ENCODE measurements at regions of chr13 and their contacts with region 1.

Region 1: DNA sequence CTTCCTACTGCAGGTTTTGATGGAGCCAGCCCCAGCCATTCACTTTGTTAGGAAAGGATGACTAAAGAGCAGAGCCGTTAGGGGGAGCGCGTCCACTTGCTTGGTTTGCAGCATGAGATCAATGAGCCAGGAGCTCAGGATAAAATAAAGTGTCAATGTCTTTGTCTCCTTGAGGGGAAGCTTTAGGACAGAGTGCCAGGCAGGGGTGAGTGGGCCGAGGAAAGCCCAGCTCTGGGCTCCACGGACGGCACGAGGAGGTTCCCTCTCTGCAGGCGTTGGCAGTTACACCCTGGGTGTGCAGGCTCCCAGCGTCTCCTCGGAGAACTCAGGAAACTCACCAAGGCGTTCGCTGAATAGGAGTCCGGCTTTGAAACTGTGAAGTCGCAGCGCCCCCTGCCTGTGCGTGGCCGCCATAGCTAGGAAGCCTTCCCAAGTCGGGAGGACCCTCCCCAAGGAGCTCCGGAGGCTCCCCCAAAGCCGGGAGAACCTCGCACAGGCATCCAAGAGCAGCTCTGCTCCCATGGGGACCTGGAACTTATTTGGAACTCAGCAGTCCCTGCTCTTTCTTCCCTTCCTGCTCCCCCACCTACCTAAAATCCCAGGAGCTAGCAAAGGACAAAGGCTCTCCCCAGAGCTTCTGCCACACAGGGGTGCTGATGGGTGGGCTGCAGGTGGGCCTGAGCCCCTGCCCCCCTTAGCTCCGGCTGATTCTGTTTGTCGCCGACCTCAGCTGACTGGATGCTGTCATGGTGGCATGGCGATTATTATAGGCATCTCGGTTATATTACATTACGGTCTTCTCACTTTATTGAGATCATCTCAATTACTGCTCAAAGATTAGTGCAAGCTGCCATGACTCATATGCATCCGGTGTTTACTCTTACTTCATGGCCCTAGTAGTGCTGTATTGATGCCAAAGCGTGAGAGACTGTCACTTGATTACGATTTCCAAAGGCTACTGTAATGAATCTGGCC is 34.4 kb downstream of the GSX1 start:
- H3K4me3 Mint-ChIP-seq: peak overlapping the region; percentile 47
- H3K27ac Mint-ChIP-seq: no peak overlapping the region
- H3K4me1 Mint-ChIP-seq: peaks cover 17% of the 10 kb centered on the region
- H3K27me3 Mint-ChIP-seq: peaks cover 91% of the 10 kb centered on the region

Region 2: DNA sequence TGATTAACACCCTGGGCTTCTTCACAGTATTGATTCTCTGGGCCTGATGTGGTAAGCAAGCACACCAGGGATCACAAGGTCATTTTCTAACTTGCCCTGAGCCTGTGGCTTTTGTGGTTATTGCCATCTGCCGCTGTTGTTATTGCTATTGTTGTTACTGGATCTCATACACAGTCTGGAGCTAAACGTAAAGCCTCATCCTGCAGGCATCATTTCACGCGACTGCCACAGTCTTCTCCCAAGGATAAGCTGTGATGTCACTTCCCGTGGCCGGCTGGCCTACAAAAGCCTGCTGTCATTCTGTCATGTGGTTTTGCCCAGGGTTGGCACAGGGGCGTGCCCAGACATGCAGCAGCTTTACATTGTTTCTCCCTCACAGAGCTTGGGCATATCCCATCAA is 912.0 kb before region 1 on chr13:
- intact Hi-C with region 1: no loop called
- H3K4me3 Mint-ChIP-seq: no peak overlapping the region
- H3K27ac Mint-ChIP-seq: no peak overlapping the region
- H3K4me1 Mint-ChIP-seq: peaks cover 7% of the 10 kb centered on the region
- H3K27me3 Mint-ChIP-seq: no peaks in the 10 kb centered on the region

Region 3: DNA sequence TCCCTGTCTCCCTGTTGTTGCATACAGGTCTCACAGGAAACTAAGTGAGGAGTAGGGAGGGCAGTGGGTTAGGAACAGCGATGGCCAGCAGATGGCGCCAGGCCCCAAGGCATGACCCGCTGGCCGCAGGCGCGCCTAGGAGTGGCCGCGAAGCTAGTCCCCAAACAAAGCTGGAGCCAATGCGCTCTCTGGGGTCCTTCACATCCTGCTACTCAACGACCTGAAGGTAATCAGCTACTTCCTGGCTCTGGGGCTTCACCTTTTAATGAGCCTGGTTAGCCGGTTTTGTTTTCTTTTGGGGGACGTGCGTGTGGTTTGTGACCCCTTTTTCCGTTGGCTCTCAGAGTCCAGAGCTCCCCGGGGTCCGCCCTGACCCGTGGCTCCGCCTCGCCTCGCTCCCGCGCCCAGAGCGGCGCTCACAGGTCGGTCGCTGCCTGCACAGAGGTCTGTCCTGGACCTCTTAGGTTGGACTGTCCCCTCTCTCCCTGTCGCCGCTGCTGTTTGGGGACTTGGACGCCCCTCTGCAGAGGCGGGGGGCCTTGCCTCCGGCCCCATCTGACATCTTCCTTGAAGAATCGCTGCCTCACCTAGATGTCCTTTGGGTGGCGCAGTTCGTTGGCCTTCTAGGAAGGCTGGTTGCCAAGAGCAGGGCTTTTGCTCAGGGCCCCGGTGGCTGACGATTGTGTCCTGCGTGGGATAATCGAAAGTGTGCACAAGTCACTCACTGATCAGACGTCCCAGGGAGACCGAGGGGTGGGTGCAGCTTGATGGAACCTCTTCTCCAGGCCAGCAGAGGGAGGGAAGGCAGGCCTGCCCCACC is 464.4 kb before region 1 on chr13:
- intact Hi-C with region 1: loop called (anchors 1 kb)
- H3K4me3 Mint-ChIP-seq: peak overlapping the region; percentile 45
- H3K27ac Mint-ChIP-seq: no peak overlapping the region
- H3K4me1 Mint-ChIP-seq: no peaks in the 10 kb centered on the region
- H3K27me3 Mint-ChIP-seq: peaks cover 27% of the 10 kb centered on the region

Region 4: DNA sequence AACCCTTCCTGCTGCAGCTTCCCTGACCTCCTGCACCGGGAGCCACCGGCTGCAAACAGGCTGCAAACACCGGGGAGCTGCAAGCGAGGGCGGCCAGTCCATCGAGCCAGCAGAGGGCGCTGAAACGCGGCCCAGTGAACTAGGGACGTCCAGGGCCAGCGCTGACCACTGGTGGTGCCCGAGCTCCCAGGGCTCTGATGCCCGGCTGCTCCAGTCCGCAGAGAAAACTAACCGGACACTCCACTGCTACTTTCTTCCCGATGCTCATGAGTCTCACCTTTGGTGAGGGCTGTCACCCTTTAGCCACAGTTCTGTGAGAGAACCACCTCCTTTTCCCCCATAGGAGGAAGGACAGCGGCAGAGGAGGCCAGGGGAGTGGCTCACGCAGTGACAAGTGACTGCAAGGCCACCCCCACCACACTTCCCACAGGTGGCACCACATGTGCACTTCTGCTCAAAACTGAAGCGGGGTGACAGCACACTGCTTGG is 293.5 kb before region 1 on chr13:
- intact Hi-C with region 1: loop called (anchors 1 kb)
- H3K4me3 Mint-ChIP-seq: peak overlapping the region; percentile 51
- H3K27ac Mint-ChIP-seq: no peak overlapping the region
- H3K4me1 Mint-ChIP-seq: peaks cover 9% of the 10 kb centered on the region
- H3K27me3 Mint-ChIP-seq: peaks cover 3% of the 10 kb centered on the region

Region 5: GRCh38 chr13:27857282-27857681 is 30.6 kb after region 1 on chr13:
- intact Hi-C with region 1: no loop called
- H3K4me3 Mint-ChIP-seq: no peak overlapping the region
- H3K27ac Mint-ChIP-seq: no peak overlapping the region
- H3K4me1 Mint-ChIP-seq: peaks cover 4% of the 10 kb centered on the region
- H3K27me3 Mint-ChIP-seq: peaks cover 28% of the 10 kb centered on the region

Region 6: DNA sequence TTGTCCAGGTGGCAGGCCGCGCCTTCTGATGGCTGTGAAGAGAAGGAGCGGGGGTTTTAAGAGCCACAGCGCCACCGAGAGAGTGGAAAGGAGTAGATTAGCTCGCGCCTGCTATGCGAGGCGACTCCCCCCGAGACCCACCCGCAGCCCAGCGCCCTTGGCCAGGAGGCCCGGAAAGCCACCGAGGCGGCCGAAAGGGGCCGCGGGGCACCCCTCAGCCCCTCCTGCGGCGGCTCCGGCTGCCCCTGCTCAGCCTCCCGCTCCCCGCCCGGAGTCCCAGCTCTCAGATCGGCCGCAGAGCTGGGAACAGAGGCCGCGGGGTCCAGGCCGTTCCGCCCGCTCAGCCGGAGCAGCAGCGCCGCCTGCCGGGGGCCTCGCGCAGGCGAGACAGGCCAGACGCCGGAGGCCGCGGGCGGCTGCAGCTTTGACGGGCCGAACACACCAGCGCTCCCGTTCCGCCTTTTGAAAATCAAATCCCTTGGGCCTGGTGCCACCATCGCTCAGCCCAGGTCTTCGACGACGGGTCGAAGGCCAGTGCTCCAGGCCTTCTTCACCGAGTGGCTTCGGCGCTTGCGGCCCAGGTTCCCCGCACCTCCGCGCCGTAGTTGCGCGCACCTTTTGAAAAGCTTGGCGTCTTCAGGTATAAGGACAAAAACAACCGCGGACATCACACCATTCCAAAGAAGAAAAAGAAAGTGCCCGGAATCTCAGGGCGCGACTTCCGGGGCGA is 127.2 kb after region 1 on chr13:
- intact Hi-C with region 1: loop called (anchors 2 kb)
- H3K4me3 Mint-ChIP-seq: peak overlapping the region; percentile 78
- H3K27ac Mint-ChIP-seq: peak overlapping the region; percentile 74
- H3K4me1 Mint-ChIP-seq: peaks cover 15% of the 10 kb centered on the region
- H3K27me3 Mint-ChIP-seq: peaks cover 80% of the 10 kb centered on the region